A673 (cell line): ENCODE measurements at regions of chr1 and their contacts with region 1.

Region 1: GRCh38 chr1:99737016-99737415 is 29.4 kb downstream of the FRRS1 start:
- DNase-seq: peak; percentile 78
- H3K4me3 ChIP-seq: no peak overlapping the region
- H3K27ac ChIP-seq: no peak overlapping the region
- H3K4me1 ChIP-seq: no peaks in the 10 kb centered on the region
- H3K27me3 ChIP-seq: no peaks in the 10 kb centered on the region
- CTCF ChIP-seq: peak; percentile 65

Region 2: DNA sequence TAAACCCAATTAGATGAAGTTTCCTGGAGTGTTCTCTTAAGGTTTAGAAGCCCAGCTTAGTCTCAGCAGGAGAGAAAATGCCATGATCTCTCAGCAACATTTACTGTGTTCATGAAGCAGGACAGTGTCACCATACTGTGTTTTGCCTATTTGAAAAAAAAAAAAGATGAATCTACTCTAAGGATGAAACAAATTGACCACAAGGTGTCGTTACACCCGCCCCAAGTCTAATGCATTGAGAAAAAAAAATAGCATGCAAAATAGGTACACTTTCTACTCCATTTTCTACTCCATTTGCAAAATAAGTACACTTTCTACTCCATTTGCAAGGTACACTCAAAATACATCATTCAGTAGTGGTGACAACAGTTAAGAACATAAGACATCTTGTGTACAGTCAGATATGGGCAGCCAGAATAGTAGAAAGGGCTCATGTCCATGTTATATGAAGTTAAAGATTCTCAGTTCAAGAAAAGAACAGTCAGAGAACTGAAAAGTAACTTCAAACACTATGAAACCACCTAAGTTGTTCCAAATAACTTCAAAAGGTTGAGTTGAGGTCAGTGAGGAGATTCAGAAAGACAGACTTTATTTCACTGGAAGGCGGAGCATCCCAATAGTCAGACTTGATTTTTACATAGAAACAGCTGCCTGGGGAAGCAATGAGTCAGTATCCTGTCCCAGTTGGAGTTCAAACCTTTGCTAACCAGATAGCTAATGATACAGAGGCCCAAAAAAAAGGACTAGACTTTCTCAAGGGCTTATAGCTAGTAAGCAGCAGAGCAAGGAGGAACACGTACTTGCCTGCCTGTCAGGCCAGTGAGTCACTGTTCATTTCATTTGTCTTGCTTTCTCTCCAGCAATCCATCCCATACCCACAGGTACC is 745.6 kb before region 1 on chr1:
- CTCF ChIA-PET with region 1: no interaction called
- POLR2A ChIA-PET with region 1: no interaction called
- intact Hi-C with region 1: loop called (anchors 10 kb)
- DNase-seq: peak; percentile 67
- H3K4me3 ChIP-seq: no peak overlapping the region
- H3K27ac ChIP-seq: no peak overlapping the region
- H3K4me1 ChIP-seq: no peaks in the 10 kb centered on the region
- H3K27me3 ChIP-seq: no peaks in the 10 kb centered on the region
- CTCF ChIP-seq: peak; percentile 67

Region 3: DNA sequence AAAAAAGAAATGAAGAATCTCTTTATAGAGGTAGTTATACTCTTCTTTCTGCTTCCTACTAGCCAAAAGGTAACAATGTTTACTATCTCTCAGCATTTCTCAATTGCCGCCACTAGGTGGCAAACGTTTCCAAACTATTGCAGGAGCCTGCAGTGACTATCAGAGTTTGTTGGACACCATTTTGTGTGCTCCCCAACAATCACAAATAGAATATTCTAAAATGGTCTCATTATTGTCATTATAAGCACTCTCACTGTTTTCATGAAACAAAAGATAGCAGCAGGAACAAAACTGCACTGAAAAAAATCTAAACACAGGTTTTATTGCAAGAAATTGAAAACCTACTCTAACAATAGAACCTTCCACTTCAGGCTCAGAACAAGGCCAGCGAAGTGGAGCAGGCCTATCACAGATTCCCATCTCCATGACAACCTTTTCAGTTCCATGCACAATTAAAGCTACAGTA is 556.6 kb before region 1 on chr1:
- CTCF ChIA-PET with region 1: no interaction called
- POLR2A ChIA-PET with region 1: no interaction called
- intact Hi-C with region 1: loop called (anchors 1 kb)
- DNase-seq: peak; percentile 87
- H3K4me3 ChIP-seq: no peak overlapping the region
- H3K27ac ChIP-seq: no peak overlapping the region
- H3K4me1 ChIP-seq: no peaks in the 10 kb centered on the region
- H3K27me3 ChIP-seq: no peaks in the 10 kb centered on the region
- CTCF ChIP-seq: peak; percentile 88

Region 4: DNA sequence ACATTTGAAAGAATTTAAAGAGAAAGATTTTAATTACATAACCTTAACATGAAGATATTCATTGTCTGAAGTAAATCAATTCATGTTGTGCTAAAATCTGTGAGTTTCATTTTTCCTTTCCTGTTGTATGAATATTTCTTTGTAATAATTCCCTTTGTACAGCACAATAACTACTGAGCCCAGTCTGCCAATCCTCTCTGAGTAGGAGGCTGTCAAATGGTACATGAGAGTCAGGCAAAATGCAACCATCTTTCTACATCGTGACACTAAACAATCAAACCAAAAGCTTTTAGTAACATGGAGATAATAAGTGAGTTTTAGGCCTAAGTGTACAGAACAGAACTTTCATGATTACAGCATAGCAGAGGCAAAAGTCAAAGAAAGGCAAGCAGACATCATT is 307.3 kb before region 1 on chr1:
- CTCF ChIA-PET with region 1: no interaction called
- POLR2A ChIA-PET with region 1: no interaction called
- intact Hi-C with region 1: no loop called
- DNase-seq: no peak
- H3K4me3 ChIP-seq: no peak overlapping the region
- H3K27ac ChIP-seq: no peak overlapping the region
- H3K4me1 ChIP-seq: no peaks in the 10 kb centered on the region
- H3K27me3 ChIP-seq: no peaks in the 10 kb centered on the region
- CTCF ChIP-seq: no peak